K562 (cell line): ENCODE measurements at regions of chr11 and their contacts with region 1.

Region 1: GRCh38 chr11:68643585-68643984 is 40.8 kb upstream of the GAL start:
- DNase-seq: peak in 2 of 4 experiments; percentile 33 to 44
- ATAC-seq: peak; percentile 74
- H3K4me3 ChIP-seq: no peak overlapping the region
- H3K27ac ChIP-seq: no peak overlapping the region
- H3K4me1 ChIP-seq: peaks cover 0 to 4% of the 10 kb centered on the region in 2 experiments; a peak in 2 of 5 replicates
- H3K27me3 ChIP-seq: peaks cover 31 to 37% of the 10 kb centered on the region in 2 experiments; a peak in 4 of 5 replicates
- CTCF ChIP-seq: peak in 2 of 3 experiments; percentile 36 to 43; a peak in 4 of 6 replicates
- EP300 ChIP-seq: no peak
- POLR2A ChIP-seq: no peak
- RAD21 ChIP-seq: peak in 1 of 2 experiments; percentile 54; a peak in 2 of 4 replicates

Region 2: GRCh38 chr11:68666849-68667248 is 23.3 kb after region 1 on chr11:
- CTCF ChIA-PET with region 1: no interaction called
- POLR2A ChIA-PET with region 1: no interaction called
- in situ Hi-C with region 1: no loop called
- intact Hi-C with region 1: no loop called
- DNase-seq: no peak
- ATAC-seq: no peak
- H3K4me3 ChIP-seq: no peak overlapping the region
- H3K27ac ChIP-seq: no peak overlapping the region
- H3K4me1 ChIP-seq: peaks cover 0 to 18% of the 10 kb centered on the region in 2 experiments; a peak in 3 of 5 replicates
- H3K27me3 ChIP-seq: peaks cover 16 to 56% of the 10 kb centered on the region in 2 experiments
- CTCF ChIP-seq: no peak
- EP300 ChIP-seq: no peak
- POLR2A ChIP-seq: no peak
- RAD21 ChIP-seq: no peak

Region 3: GRCh38 chr11:68798221-68798813 is 154.7 kb after region 1 on chr11:
- CTCF ChIA-PET with region 1: no interaction called
- POLR2A ChIA-PET with region 1: no interaction called
- in situ Hi-C with region 1: no loop called
- intact Hi-C with region 1: loop called (anchors 5 kb)
- DNase-seq: peak; percentile 49 to 65 (median 58)
- ATAC-seq: peak; percentile 91
- H3K4me3 ChIP-seq: no peak overlapping the region
- H3K27ac ChIP-seq: no peak overlapping the region
- H3K4me1 ChIP-seq: peaks cover 0 to 6% of the 10 kb centered on the region in 2 experiments; a peak in 2 of 5 replicates
- H3K27me3 ChIP-seq: no peaks in the 10 kb centered on the region
- CTCF ChIP-seq: peak; percentile 66 to 85 (median 69)
- EP300 ChIP-seq: no peak
- POLR2A ChIP-seq: no peak
- RAD21 ChIP-seq: peak; percentile 32 to 64; a peak in 2 of 4 replicates